Naive thymus-derived CD4-positive, alpha-beta T cell (primary cell): ENCODE measurements at regions of chr3 and their contacts with region 1.

Region 1: DNA sequence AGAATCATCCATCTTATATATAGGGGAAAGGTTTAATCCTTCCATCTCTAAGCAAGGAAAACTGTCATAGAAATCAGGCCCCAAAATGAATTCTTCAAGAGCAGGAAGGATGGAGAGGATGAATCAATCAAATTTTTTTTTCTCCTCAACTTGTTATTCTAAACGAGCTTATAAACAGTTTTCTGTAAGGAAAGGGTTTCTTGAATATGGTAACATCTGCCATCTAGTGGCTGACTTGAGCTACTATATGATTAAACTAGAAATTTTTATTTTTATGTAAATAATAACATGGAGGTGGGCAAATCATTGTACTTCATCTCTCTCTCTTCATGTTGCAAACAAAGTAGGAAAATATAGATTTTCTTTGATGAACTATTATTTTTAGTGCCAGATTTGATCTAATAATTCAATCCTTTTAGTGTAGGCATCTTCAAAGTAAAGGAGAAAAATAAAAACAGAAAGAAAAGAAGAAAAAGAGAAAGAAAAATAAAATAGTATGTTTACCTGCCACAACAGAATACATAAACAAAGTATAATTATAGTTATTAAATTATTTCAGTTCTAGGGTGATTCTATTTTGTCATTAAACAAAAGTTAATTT is 146.6 kb downstream of the SERPINI1 start:
- DNase-seq: peak in 6 of 9 donors; percentile 1 to 45 (median 30)
- ATAC-seq: peak; percentile 61
- H3K4me3 ChIP-seq: no peak overlapping the region
- H3K4me3 Mint-ChIP-seq: peak overlapping the region in 3 of 10 donors; percentile 22 to 41 (median 27)
- H3K27ac ChIP-seq: no peak overlapping the region
- H3K27ac Mint-ChIP-seq: no peak overlapping the region
- H3K4me1 ChIP-seq: no peaks in the 10 kb centered on the region
- H3K4me1 Mint-ChIP-seq: peaks cover 0 to 5% (median 2%) of the 10 kb centered on the region in 7 donors
- H3K27me3 ChIP-seq: no peaks in the 10 kb centered on the region
- H3K27me3 Mint-ChIP-seq: peaks cover 9 to 29% (median 17%) of the 10 kb centered on the region in 5 donors

Region 2: GRCh38 chr3:167380004-167380689 is 502.0 kb before region 1 on chr3 and contains the start of gene ZBBX:
- CTCF ChIA-PET with region 1: interaction called, 11 read pairs
- POLR2A ChIA-PET with region 1: no interaction called
- intact Hi-C with region 1: loop called (anchors 1 kb)
- DNase-seq: peak; percentile 75 to 87 (median 83)
- ATAC-seq: peak; percentile 95
- H3K4me3 ChIP-seq: peak within 1 kb of the TSS; percentile 49
- H3K4me3 Mint-ChIP-seq: peak within 1 kb of the TSS; percentile 71 to 91 (median 85)
- H3K27ac ChIP-seq: no peak within 1 kb of the TSS
- H3K27ac Mint-ChIP-seq: peak within 1 kb of the TSS; percentile 58 to 92 (median 77)
- H3K4me1 ChIP-seq: peaks cover 0 to 3% of the 10 kb centered on the region in 2 donors
- H3K4me1 Mint-ChIP-seq: peaks cover 5 to 14% (median 7%) of the 10 kb centered on the region in 7 donors
- H3K27me3 ChIP-seq: no peaks in the 10 kb centered on the region
- H3K27me3 Mint-ChIP-seq: peaks cover 0 to 15% (median 6%) of the 10 kb centered on the region in 5 donors
- total RNA-seq, gene ZBBX: not detected

Region 3: DNA sequence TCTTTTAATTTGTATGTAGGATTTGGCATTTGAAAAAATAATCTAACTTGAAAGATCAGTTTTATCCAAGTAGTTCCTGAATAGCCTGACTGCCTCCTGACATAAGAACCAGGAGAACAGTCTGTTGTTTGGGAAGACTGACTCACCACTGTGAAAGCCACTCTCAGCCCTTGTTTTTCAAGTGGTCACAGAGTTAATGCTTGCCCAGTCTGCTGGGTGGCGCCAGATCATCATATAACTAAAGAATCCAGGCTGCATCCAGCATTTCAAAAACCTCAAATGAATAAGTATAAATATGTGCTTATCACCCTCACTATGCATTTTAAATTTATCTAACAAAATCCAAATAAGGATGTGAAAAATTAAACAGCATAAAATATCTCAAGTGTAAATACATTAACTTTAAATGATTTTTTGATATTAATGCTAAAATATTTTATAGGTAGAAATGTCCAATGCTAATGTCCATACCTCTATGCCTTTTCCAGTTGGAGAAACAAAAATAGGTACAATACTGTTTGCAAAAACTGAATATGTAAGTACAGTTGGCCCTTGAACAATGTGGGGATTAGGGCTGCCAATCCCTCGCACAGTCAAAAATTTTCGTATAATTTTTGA is 475.2 kb before region 1 on chr3:
- CTCF ChIA-PET with region 1: no interaction called
- POLR2A ChIA-PET with region 1: no interaction called
- intact Hi-C with region 1: loop called in 1 of 2 experiments (anchors 1 kb)
- DNase-seq: no peak
- ATAC-seq: no peak
- H3K4me3 ChIP-seq: no peak overlapping the region
- H3K4me3 Mint-ChIP-seq: no peak overlapping the region
- H3K27ac ChIP-seq: no peak overlapping the region
- H3K27ac Mint-ChIP-seq: no peak overlapping the region
- H3K4me1 ChIP-seq: no peaks in the 10 kb centered on the region
- H3K4me1 Mint-ChIP-seq: no peaks in the 10 kb centered on the region
- H3K27me3 ChIP-seq: no peaks in the 10 kb centered on the region
- H3K27me3 Mint-ChIP-seq: peaks cover 0 to 3% (median 0%) of the 10 kb centered on the region in 5 donors

Region 4: DNA sequence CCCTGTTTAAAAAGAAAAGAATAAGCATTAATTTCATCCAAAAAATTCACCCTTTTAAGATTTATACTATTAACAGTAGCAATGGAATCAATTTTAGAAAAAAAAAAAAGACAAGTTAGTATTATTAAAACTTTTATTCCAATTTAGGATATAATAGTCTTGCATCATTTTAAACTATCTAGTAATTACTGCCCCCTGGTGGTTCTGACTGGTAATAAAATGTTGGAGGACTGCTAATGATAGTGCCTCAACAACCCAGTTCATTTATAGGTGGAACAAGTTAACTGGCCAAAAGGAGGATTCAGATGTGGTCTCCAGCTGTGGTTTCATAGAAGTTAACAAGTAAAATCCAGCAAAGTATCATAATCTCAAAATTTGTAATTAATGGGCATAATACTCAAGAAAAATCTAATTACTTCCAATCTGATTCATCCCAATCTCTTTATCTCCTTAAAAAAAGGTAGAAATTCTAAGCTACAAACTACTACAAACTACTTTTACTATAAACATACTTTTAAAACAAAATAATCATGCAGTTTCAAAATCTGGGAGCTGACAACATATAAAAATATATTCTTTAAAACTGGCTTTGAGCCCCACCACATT is 197.7 kb before region 1 on chr3:
- CTCF ChIA-PET with region 1: no interaction called
- POLR2A ChIA-PET with region 1: no interaction called
- intact Hi-C with region 1: loop called (anchors 2 to 10 kb)
- DNase-seq: peak in 8 of 9 donors; percentile 25 to 64 (median 52)
- ATAC-seq: peak; percentile 85
- H3K4me3 ChIP-seq: no peak overlapping the region
- H3K4me3 Mint-ChIP-seq: no peak overlapping the region
- H3K27ac ChIP-seq: no peak overlapping the region
- H3K27ac Mint-ChIP-seq: no peak overlapping the region
- H3K4me1 ChIP-seq: no peaks in the 10 kb centered on the region
- H3K4me1 Mint-ChIP-seq: peaks cover 0 to 3% (median 0%) of the 10 kb centered on the region in 7 donors
- H3K27me3 ChIP-seq: no peaks in the 10 kb centered on the region
- H3K27me3 Mint-ChIP-seq: no peaks in the 10 kb centered on the region

Region 5: DNA sequence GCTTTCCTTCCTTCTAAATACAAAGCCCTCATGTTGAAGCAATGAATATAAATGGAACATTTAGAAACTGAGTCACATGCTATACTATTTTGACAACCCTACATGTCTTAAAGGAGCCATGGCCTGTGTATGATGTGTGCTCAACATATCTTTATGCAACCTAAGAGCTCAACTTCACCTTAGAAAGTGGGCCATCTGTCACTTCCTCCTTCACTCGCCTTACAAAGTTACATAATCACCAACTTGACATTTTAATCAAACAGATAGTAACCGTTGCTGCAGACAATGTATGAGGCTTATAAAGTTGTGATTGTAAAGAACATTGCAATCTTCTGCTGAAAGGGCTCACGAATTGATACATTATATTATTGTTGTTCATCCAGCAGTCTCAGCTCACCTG is 16.9 kb after region 1 on chr3:
- CTCF ChIA-PET with region 1: no interaction called
- POLR2A ChIA-PET with region 1: no interaction called
- intact Hi-C with region 1: no loop called
- DNase-seq: no peak
- ATAC-seq: no peak
- H3K4me3 ChIP-seq: no peak overlapping the region
- H3K4me3 Mint-ChIP-seq: no peak overlapping the region
- H3K27ac ChIP-seq: no peak overlapping the region
- H3K27ac Mint-ChIP-seq: no peak overlapping the region
- H3K4me1 ChIP-seq: no peaks in the 10 kb centered on the region
- H3K4me1 Mint-ChIP-seq: peaks cover 0 to 1% (median 0%) of the 10 kb centered on the region in 7 donors
- H3K27me3 ChIP-seq: no peaks in the 10 kb centered on the region
- H3K27me3 Mint-ChIP-seq: peaks cover 3 to 10% (median 8%) of the 10 kb centered on the region in 5 donors

Region 6: GRCh38 chr3:168124291-168124690 is 242.1 kb after region 1 on chr3:
- CTCF ChIA-PET with region 1: no interaction called
- POLR2A ChIA-PET with region 1: no interaction called
- intact Hi-C with region 1: no loop called
- DNase-seq: no peak
- ATAC-seq: no peak
- H3K4me3 ChIP-seq: no peak overlapping the region
- H3K4me3 Mint-ChIP-seq: no peak overlapping the region
- H3K27ac ChIP-seq: no peak overlapping the region
- H3K27ac Mint-ChIP-seq: no peak overlapping the region
- H3K4me1 ChIP-seq: no peaks in the 10 kb centered on the region
- H3K4me1 Mint-ChIP-seq: no peaks in the 10 kb centered on the region
- H3K27me3 ChIP-seq: no peaks in the 10 kb centered on the region
- H3K27me3 Mint-ChIP-seq: peaks cover 0 to 11% (median 0%) of the 10 kb centered on the region in 5 donors